Heart left ventricle (tissue), 16 donors: ENCODE measurements at regions of chr15 and their contacts with region 1.

Region 1: DNA sequence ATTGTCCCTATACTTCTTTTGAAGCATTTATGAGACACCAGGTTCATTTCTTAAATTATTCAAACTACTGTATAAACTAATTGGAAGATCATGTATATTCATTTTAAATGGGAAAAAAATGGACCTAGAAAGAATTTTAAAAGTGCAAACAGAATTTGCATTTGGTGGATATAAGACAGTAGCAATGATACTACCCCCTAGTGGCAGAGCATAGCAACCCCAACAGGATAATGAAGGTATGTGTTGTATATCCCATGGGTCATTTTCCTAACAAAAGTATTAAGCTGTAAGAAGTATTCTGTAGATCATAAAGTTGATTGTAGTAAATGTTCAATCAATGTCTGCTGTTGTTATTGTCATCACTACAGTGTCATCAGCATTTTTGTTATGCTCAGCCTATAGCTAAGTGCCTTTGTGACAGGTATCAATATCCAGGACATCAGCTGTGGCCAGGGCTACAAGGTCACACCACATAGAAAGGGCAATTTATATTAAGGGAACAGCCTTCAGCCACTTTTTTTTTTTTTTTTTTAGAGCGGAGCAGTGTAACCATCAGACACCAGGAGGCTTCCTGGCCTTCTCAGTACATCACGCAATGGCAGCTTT is 175.8 kb downstream of the FOXB1 start:
- DNase-seq: no peak
- ATAC-seq: no peak
- H3K4me3 ChIP-seq: no peak overlapping the region
- H3K27ac ChIP-seq: no peak overlapping the region
- H3K4me1 ChIP-seq: no peaks in the 10 kb centered on the region
- H3K27me3 ChIP-seq: peaks cover 0 to 16% (median 0%) of the 10 kb centered on the region in 9 donors
- CTCF ChIP-seq: peak; percentile 52 to 87 (median 68)
- POLR2A ChIP-seq: no peak

Region 2: DNA sequence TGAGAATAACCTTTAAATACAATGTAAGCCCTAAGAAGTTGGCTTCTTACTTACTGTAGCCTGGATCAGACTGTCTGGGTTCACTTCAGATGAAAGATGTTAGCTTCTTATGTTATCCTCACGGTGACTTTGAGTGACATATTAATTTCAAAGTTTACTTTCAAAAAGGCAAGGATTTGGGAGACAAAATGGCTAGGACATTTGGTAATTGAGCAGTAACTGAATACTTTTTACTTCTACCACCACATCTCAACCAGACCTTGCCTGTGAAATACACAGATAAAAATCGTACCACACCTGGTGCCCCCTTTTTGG is 454.8 kb before region 1 on chr15:
- intact Hi-C with region 1: loop called in 8 of 10 experiments (anchors 5 to 10 kb)
- DNase-seq: no peak
- ATAC-seq: no peak
- H3K4me3 ChIP-seq: no peak overlapping the region
- H3K27ac ChIP-seq: no peak overlapping the region
- H3K4me1 ChIP-seq: no peaks in the 10 kb centered on the region
- H3K27me3 ChIP-seq: peaks cover 0 to 25% (median 4%) of the 10 kb centered on the region in 9 donors
- CTCF ChIP-seq: no peak
- POLR2A ChIP-seq: no peak

Region 3: GRCh38 chr15:59736184-59736583 is 443.7 kb before region 1 on chr15:
- intact Hi-C with region 1: loop called in 1 of 10 experiments (anchors 10 kb)
- DNase-seq: no peak
- ATAC-seq: no peak
- H3K4me3 ChIP-seq: no peak overlapping the region
- H3K27ac ChIP-seq: no peak overlapping the region
- H3K4me1 ChIP-seq: no peaks in the 10 kb centered on the region
- H3K27me3 ChIP-seq: peaks cover 0 to 13% (median 0%) of the 10 kb centered on the region in 9 donors
- CTCF ChIP-seq: peak in 1 of 12 donors; percentile 19
- POLR2A ChIP-seq: no peak